ENCODE measurements at regions of chr9 and their contacts with region 1.

Region 1: DNA sequence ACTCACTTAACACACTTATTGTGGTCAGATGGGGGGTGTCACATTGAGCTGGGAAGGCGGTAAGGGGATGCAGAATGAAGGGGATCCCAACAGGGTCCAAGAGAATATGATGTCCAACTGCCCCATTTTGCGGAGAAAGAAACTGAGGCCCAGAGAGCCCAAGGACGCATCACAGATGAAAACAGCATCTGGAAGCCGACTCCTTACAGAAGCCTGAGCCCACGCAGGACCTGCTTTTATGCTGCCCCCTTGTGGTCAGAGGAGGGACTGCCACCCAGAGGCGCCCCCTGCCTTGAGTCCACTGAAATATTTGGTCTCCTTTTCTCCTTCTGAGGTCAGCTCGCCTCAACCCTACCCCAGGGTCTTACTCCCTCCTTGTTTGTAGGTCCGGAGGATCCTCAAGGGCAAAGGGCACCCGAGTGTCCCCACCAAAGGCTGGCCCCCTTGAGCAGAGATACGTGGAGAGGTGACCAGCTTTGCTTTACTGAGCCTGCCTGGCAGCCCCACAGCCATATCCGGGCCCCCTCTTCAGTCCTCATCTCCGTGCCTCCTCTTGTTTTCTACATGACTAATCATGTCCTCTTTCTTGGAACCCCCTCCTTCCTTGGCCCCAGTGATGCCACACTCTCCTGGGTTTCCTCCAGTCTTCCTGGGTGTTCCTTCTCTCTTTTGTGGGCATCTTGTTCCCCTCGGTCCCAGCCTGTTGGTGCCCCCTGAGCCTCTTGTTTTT is 30.0 kb upstream of the TTLL11 start:
- DNase-seq: peak; percentile 86

Region 2: DNA sequence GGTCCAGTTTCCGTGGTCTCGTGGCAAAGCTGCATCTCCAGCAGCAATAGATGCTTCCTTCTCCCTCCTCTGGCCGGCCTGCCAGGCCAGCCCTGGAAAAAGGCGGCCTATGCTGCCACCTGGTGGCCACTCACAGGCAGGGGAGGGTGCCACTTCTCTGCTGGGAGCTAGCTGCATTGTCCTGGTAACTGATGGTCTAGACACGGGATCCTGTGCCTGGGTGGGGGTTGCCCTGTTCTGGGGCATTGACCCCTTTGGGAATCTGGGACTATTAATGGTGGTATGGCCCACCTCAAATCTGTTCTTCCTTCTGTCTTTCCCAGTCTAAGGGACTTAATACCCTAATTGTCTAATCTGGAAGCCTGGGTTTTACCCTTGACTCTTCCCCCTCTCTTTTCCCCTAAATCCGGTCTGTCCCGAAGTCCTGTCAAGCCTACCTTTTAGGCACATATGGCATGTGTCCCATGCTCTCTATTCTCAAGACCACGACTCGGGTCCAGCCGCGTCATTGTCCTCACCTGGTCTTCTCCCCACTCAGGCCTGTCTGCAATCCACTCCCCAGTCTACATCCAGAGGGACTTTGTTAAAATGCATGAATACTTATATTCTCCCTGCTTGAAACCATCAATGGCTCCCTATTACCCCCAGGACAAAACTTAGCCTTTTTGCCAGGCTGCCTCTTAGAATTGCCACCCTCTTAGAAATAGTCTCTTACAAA is 227.7 kb after region 1 on chr9:
- in situ Hi-C with region 1: loop called (anchors 5 kb)
- DNase-seq: peak; percentile 85

Region 3: DNA sequence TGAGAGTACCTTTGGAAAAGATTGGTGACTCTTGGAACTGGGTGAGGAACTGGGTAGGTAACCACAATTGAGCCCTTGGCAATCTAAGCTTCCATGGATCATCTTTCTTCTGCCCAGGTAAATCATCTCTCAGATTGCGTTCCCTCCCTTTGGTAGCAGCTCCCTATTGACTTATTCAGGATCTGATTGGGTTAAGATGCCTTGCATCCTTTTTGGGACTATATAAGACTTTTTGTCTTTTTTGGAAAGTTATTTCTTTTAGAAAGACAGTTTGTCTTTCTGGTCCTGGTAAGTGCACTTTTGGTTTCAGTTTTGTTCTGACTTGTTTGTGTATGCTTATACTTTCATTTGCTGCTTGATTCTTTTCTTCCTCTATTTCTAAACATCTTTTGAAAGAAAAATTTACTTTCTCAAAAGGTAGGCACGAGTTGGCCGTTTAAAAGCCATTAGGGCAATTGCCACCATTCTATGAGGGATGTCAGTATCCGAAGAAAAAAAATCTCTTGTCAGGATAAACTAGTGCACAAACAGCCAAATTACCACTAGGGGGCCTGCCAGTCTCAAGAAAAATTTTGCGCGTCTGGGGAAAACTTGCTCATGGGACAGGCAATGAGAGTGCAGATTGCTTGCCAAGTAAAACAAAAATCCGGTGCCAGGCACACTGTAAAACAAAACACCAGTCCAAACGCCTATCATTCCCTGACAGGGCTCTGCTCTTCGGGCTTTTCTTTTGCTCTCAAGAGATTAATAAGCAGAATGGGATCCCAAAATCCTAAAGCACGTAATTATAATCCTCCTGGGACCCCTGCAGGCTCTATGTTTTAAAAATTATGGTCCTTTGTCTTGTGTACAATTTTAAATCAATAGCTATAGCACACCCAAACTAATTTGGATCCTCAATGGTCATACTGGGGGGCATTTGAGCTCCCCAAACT is 341.8 kb after region 1 on chr9:
- in situ Hi-C with region 1: loop called (anchors 25 kb)
- DNase-seq: peak; percentile 80

Region 4: DNA sequence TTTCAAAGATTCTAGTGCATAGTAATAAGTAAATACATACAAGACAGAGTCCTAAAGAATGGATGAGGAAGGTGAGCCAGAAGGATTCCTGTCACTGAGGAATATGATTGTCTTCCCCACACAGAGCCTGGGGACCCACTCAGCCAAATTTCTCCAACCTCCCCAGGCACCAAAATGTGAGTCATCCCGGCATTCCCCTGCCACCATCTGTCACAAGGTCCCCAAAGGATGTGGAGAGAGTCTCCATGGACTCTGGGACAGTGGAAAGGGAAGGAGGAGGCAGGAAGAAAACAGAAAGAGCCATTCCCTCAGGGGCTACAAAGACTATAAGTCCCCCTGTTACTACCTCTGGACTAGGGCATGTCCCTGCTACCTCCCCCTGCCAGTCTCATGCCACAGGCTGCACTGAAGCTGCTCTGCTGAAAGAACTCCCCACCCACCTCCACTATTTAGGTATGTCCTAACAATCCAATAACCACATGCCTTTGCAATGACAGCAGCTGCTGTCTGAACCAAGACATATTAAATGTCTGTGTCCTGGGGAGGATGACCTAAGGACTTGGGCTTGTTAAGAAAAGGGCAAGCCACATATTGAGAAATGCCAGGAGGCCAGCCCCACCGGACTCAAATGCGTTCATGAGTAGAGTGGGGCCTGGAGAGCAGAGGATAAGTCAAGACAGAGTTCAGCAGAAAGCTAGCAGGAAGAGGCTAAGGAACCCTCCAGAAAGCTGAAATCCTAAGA is 655.0 kb after region 1 on chr9:
- in situ Hi-C with region 1: loop called (anchors 25 kb)
- DNase-seq: no peak